ENCODE measurements at regions of chr10 and their contacts with region 1.

Region 1: DNA sequence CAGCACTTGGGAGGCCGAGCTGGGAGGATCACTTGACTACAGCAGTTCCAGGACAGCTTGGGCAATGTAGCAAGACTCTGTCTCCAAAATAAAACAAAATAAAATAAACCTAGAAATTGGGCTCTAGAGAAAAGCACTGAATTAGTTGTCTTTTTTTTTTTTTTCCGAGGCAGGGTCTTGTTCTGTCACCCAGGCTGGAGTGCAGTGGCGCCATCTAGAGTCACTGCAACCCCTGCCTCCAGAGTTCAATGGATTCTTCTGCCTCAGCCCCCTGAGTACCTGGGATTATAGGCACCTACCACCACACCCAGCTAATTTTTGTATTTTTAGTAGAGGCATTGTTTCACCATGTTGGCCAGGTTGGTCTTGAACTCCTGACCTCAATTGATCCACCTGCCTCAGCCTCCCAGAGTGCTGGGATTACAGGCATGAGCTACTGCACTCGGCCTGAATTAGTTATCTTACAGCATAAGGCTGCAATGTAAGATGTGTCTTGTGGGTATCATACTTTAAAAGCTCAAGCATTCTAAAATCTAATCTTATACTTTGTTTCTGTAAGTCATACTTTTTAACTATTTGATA is 12.8 kb downstream of the MEIG1 start:
- DNase-seq: peak in 8 of 9 experiments; percentile 21 to 70 (median 51)
- ATAC-seq: peak; percentile 54
- H3K4me3 ChIP-seq: no peak overlapping the region
- H3K4me3 Mint-ChIP-seq: no peak overlapping the region
- H3K27ac ChIP-seq: no peak overlapping the region
- H3K27ac Mint-ChIP-seq: no peak overlapping the region
- H3K4me1 ChIP-seq: no peaks in the 10 kb centered on the region
- H3K4me1 Mint-ChIP-seq: no peaks in the 10 kb centered on the region
- H3K27me3 ChIP-seq: no peaks in the 10 kb centered on the region
- H3K27me3 Mint-ChIP-seq: peaks cover 14% of the 10 kb centered on the region
- CTCF ChIP-seq: peak; percentile 62

Region 2: DNA sequence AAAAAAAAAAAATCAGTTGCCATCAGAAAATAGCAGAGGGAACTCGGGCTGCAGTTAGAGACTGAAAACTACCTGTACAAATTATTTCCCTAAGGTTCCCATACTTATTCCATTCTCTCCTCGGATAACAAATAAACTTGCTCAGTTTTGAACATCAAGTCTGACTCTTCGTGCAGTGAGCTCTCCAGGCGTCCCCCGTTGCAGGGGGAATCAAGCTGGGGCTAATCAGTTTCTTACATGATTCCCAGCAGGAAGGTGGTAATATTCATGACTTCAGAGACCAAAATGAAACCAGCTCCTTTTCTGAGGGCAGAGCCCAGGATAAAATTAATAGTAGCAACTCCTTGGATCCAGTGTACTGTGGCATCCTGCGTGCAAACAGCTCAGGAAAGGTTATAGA is 776.5 kb before region 1 on chr10:
- CTCF ChIA-PET with region 1: interaction called, 4 read pairs
- POLR2A ChIA-PET with region 1: no interaction called
- intact Hi-C with region 1: loop called (anchors 2 to 5 kb)
- DNase-seq: no peak
- ATAC-seq: no peak
- H3K4me3 ChIP-seq: no peak overlapping the region
- H3K4me3 Mint-ChIP-seq: no peak overlapping the region
- H3K27ac ChIP-seq: no peak overlapping the region
- H3K27ac Mint-ChIP-seq: no peak overlapping the region
- H3K4me1 ChIP-seq: no peaks in the 10 kb centered on the region
- H3K4me1 Mint-ChIP-seq: no peaks in the 10 kb centered on the region
- H3K27me3 ChIP-seq: peaks cover 2 to 3% of the 10 kb centered on the region in 2 experiments
- H3K27me3 Mint-ChIP-seq: peaks cover 36% of the 10 kb centered on the region
- CTCF ChIP-seq: no peak

Region 3: GRCh38 chr10:14491806-14492205 is 480.2 kb before region 1 on chr10:
- CTCF ChIA-PET with region 1: no interaction called
- POLR2A ChIA-PET with region 1: no interaction called
- intact Hi-C with region 1: loop called in 1 of 2 experiments (anchors 10 kb)
- DNase-seq: no peak
- ATAC-seq: no peak
- H3K4me3 ChIP-seq: no peak overlapping the region
- H3K4me3 Mint-ChIP-seq: no peak overlapping the region
- H3K27ac ChIP-seq: no peak overlapping the region
- H3K27ac Mint-ChIP-seq: no peak overlapping the region
- H3K4me1 ChIP-seq: no peaks in the 10 kb centered on the region
- H3K4me1 Mint-ChIP-seq: no peaks in the 10 kb centered on the region
- H3K27me3 ChIP-seq: no peaks in the 10 kb centered on the region
- H3K27me3 Mint-ChIP-seq: peaks cover 5% of the 10 kb centered on the region
- CTCF ChIP-seq: no peak

Region 4: DNA sequence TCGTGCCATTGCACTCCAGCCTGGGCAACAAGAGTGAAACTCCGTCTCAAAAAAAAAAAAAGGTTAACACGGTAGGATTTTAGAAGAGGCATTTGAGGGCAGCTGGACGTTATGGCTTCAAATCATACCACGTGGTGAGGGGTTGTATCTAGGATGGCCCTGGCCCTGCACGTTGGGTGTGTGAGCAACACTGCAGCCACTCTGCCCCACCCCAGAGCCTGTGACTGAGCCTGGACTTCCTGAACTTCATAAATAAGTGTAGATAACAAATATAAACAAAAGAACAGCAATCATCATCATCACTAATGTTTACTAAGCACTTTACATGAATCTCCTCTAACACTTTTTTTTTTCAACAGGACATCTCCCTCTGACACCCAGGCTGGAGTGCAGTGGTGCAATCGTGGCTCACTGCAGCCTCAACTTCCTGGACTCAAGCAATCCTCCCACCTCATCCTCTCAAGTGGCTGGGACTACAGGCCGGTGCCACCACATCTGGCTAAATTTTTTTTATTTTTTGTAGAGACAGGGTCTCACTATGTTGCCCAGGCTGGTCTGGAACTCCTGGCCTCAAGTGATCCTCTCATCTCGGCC is 471.7 kb before region 1 on chr10:
- CTCF ChIA-PET with region 1: no interaction called
- POLR2A ChIA-PET with region 1: no interaction called
- intact Hi-C with region 1: loop called (anchors 1 to 10 kb)
- DNase-seq: no peak
- ATAC-seq: no peak
- H3K4me3 ChIP-seq: no peak overlapping the region
- H3K4me3 Mint-ChIP-seq: no peak overlapping the region
- H3K27ac ChIP-seq: no peak overlapping the region
- H3K27ac Mint-ChIP-seq: no peak overlapping the region
- H3K4me1 ChIP-seq: peaks cover 9% of the 10 kb centered on the region
- H3K4me1 Mint-ChIP-seq: peaks cover 6% of the 10 kb centered on the region
- H3K27me3 ChIP-seq: no peaks in the 10 kb centered on the region
- H3K27me3 Mint-ChIP-seq: no peaks in the 10 kb centered on the region
- CTCF ChIP-seq: no peak

Region 5: GRCh38 chr10:14543046-14543903 is 428.7 kb before region 1 on chr10:
- CTCF ChIA-PET with region 1: no interaction called
- POLR2A ChIA-PET with region 1: no interaction called
- intact Hi-C with region 1: no loop called
- DNase-seq: peak in 6 of 9 experiments; percentile 47 to 82 (median 66)
- ATAC-seq: peak; percentile 84
- H3K4me3 ChIP-seq: peak overlapping the region; percentile 4 to 35
- H3K4me3 Mint-ChIP-seq: peak overlapping the region; percentile 75
- H3K27ac ChIP-seq: peak overlapping the region; percentile 68
- H3K27ac Mint-ChIP-seq: peak overlapping the region; percentile 95
- H3K4me1 ChIP-seq: peaks cover 62% of the 10 kb centered on the region
- H3K4me1 Mint-ChIP-seq: peaks cover 89% of the 10 kb centered on the region
- H3K27me3 ChIP-seq: no peaks in the 10 kb centered on the region
- H3K27me3 Mint-ChIP-seq: no peaks in the 10 kb centered on the region
- CTCF ChIP-seq: peak; percentile 76

Region 6: DNA sequence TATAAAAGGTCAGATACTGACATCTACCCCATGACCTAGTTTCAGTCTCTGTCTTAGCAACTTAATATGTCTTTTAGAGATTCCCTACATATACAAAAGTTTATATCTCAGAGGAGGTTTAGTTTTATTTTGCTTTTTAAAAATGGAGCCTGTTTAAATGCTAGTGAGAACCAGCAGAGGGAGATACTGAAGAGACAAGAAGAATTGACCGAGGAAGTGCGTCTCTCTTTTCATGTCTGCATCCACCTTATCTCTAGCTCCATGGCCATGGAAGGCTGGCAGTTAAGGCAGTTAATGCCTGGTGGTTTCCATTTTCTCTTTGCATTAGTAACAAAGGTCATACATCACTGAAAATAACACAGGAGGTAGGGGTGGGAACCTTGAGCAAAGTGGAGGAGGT is 82.6 kb before region 1 on chr10:
- CTCF ChIA-PET with region 1: no interaction called
- POLR2A ChIA-PET with region 1: no interaction called
- intact Hi-C with region 1: loop called in 1 of 2 experiments (anchors 5 kb)
- DNase-seq: peak in 2 of 9 experiments; percentile 16 to 29
- ATAC-seq: peak; percentile 49
- H3K4me3 ChIP-seq: no peak overlapping the region
- H3K4me3 Mint-ChIP-seq: no peak overlapping the region
- H3K27ac ChIP-seq: no peak overlapping the region
- H3K27ac Mint-ChIP-seq: no peak overlapping the region
- H3K4me1 ChIP-seq: no peaks in the 10 kb centered on the region
- H3K4me1 Mint-ChIP-seq: peaks cover 3% of the 10 kb centered on the region
- H3K27me3 ChIP-seq: no peaks in the 10 kb centered on the region
- H3K27me3 Mint-ChIP-seq: no peaks in the 10 kb centered on the region
- CTCF ChIP-seq: no peak